MCF 10A (cell line): ENCODE measurements at regions of chr2 and their contacts with region 1.

Region 1: GRCh38 chr2:23760736-23761135 is 166.2 kb downstream of the ATAD2B start:
- DNase-seq: peak; percentile 41
- H3K4me3 Mint-ChIP-seq: no peak overlapping the region
- H3K27ac Mint-ChIP-seq: peak overlapping the region; percentile 82
- H3K4me1 Mint-ChIP-seq: peaks cover 25% of the 10 kb centered on the region
- H3K27me3 Mint-ChIP-seq: no peaks in the 10 kb centered on the region
- CTCF ChIP-seq: no peak

Region 2: GRCh38 chr2:23745726-23746105 is 15.0 kb before region 1 on chr2:
- CTCF ChIA-PET with region 1: interaction called, 6 read pairs
- POLR2A ChIA-PET with region 1: interaction called, 14 read pairs
- intact Hi-C with region 1: no loop called
- DNase-seq: peak; percentile 84
- H3K4me3 Mint-ChIP-seq: no peak overlapping the region
- H3K27ac Mint-ChIP-seq: peak overlapping the region; percentile 65
- H3K4me1 Mint-ChIP-seq: peaks cover 20% of the 10 kb centered on the region
- H3K27me3 Mint-ChIP-seq: no peaks in the 10 kb centered on the region
- CTCF ChIP-seq: no peak